Activated T-helper 1 cell treated with anti-CD3 and anti-CD28 coated beads, Interleukin-12 subunit alpha, Interleukin-12 subunit beta, Interleukin-2, Interleukin-4 antibody, amounts not matched to agents 30 ng/mL and 10 ng/mL and 1 ng/mL, durations not matched to agents 14 hours and 24 hours and 36 hours (primary cell): ENCODE measurements at regions of chr6 and their contacts with region 1.

Region 1: GRCh38 chr6:24581084-24581669 is 64.8 kb downstream of the KIAA0319 start:
- DNase-seq: peak; percentile 57
- H3K4me3 Mint-ChIP-seq: no peak overlapping the region
- H3K27ac Mint-ChIP-seq: no peak overlapping the region
- H3K4me1 Mint-ChIP-seq: peaks cover 6% of the 10 kb centered on the region
- H3K27me3 Mint-ChIP-seq: peaks cover 27% of the 10 kb centered on the region

Region 2: GRCh38 chr6:24415753-24416152 is 165.4 kb before region 1 on chr6:
- intact Hi-C with region 1: no loop called
- DNase-seq: no peak
- H3K4me3 Mint-ChIP-seq: no peak overlapping the region
- H3K27ac Mint-ChIP-seq: no peak overlapping the region
- H3K4me1 Mint-ChIP-seq: no peaks in the 10 kb centered on the region
- H3K27me3 Mint-ChIP-seq: no peaks in the 10 kb centered on the region

Region 3: DNA sequence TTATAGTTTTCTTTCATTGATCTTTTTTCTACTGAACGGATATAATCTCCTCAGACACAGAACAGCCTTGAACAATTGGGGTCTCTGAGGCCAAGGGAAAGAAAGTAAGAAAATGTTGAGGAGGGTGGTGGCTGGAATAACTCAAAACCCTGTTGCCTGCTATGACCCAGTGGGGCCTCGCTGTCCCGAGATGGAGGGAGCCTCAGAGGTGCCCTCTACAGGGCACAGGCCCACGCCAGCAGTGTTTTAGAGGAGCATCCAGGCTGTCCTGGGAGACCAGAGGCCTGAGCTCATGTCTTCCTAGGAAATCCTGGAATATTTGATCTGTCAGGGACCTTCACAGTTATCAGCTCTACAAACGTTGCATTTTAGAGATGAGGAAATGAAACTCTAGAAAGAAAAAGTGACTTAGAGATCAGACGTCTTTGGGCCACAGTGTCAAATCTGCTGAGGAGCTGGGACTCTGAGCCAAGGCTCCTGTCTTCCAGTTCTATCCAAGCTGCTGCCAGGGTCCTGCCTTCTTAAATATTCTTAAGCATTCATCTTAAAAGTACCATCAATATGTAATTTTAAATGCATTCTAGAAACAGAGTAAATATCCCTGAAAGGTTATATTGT is 60.1 kb before region 1 on chr6:
- intact Hi-C with region 1: loop called (anchors 2 kb)
- DNase-seq: no peak
- H3K4me3 Mint-ChIP-seq: no peak overlapping the region
- H3K27ac Mint-ChIP-seq: no peak overlapping the region
- H3K4me1 Mint-ChIP-seq: peaks cover 20% of the 10 kb centered on the region
- H3K27me3 Mint-ChIP-seq: no peaks in the 10 kb centered on the region

Region 4: DNA sequence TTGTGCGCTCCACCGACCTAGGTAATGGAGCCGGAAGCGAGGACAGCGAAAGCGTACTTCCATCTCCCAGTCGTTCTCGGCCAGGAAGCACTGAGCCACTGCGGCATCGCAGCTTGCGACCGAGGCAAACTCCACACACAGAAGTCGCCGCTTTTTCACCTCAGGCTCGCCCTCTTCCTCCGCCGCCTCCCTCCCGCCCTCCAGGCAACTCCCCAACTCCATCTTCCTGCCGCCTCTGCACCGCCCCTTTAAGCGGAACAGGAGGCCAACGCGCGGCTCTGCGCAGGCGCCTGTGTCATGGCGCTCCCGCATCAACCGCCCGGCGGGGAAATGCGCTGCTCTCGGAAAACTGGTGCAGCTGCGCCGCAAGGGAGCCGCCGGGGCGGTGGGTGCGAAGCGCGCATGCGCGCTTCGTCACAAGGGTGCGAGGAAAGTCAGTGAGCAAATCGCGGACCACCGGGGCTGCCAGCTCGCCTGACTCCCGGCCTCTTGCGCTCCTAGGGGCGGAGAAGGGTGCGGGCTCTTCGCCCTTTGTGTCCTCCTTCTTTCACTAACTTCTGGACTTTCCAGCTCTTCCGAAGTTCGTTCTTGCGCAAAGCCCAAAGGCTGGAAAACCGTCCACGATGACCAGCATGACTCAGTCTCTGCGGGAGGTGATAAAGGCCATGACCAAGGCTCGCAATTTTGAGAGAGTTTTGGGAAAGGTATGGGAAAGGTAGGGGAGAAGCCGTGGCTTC is 85.6 kb after region 1 on chr6 and contains the starts of genes ACOT13 and TDP2:
- intact Hi-C with region 1: loop called (anchors 1 kb)
- DNase-seq: peak; percentile 97
- H3K4me3 Mint-ChIP-seq: peak within 1 kb of the TSS; percentile 92
- H3K27ac Mint-ChIP-seq: peak within 1 kb of the TSS; percentile 99
- H3K4me1 Mint-ChIP-seq: peaks cover 61% of the 10 kb centered on the region
- H3K27me3 Mint-ChIP-seq: no peaks in the 10 kb centered on the region
- total RNA-seq, gene ACOT13: 27.0 and 27.4 TPM in 2 replicates
- total RNA-seq, gene TDP2: 46.1 and 47.4 TPM in 2 replicates

Region 5: DNA sequence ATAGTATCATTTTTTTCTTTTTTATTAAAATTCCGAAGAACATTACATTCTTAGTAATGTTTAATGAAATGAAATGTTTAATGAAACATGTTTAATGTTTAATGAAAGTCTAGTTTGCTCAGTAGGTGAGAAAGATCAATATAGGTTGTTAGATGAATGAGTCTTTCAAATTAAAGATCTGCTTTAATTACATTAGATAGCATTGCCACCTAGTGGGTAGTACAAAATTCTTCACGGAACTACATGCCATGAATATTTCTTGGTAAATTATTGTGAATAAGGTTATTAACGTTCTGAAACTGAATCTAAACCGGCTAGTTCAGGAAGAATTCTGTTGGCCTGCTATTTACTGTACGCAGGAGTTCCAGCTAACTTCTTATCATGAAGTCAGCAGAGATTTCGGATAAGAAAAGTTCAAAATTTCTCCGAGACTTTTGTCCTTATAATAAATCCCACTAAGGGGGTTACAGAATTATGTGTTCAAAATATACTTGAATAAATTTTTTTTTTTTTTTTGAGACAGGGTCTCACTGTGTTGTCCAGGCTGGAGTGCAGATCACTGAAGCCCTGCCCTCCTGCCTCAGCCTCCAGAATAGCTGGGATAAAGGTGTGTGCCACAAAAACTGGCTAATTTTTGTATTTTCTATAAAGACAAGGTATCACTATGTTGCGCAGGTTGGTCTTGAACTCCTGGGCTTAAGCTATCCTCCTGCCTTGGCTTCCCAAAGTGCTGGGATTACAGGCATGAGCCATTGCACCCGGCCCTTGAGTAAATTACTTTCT is 185.7 kb after region 1 on chr6:
- intact Hi-C with region 1: loop called (anchors 1 kb)
- DNase-seq: no peak
- H3K4me3 Mint-ChIP-seq: no peak overlapping the region
- H3K27ac Mint-ChIP-seq: no peak overlapping the region
- H3K4me1 Mint-ChIP-seq: peaks cover 9% of the 10 kb centered on the region
- H3K27me3 Mint-ChIP-seq: no peaks in the 10 kb centered on the region

Region 6: DNA sequence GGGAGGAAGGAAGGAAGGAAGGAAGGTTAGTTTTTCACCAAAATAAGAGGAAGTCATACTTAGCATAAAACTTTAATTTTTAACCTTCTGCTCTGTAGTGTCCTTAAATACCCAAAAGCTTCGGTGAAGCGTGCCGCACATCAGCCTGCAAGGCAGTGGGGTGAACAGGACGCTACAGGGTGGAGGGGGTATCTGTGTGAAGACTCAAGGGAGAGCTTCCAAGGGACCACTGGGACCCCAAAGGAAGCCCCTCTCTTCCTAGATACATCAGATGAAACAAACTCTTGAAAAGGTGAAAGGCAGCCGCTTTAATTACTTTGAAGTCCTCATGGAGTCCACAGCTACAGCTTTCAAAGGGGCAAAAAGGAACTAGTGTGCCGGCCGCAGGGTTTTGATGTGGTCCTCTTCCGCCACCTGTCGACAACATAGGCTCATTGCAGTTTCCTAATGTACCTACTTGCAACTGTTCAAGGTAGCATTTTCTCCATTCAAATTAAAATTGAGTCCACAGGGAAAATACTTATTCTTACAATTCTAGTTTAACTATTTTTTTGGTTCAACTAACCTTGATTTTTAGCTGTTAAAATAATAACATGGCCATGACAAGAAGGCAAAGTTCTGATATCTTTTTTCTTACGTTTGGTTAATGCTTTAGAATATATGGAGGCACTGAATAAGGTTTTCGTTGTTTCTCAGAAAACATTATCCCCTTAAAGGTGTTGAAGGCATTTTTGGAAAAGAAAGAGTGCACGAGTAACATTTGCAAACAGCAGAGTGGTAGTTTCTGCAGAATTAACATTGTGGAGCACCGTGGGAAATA is 489.6 kb after region 1 on chr6:
- intact Hi-C with region 1: loop called (anchors 1 kb)
- DNase-seq: peak; percentile 74
- H3K4me3 Mint-ChIP-seq: no peak overlapping the region
- H3K27ac Mint-ChIP-seq: peak overlapping the region; percentile 86
- H3K4me1 Mint-ChIP-seq: peaks cover 10% of the 10 kb centered on the region
- H3K27me3 Mint-ChIP-seq: peaks cover 3% of the 10 kb centered on the region